ENCODE measurements at regions of chr1 and their contacts with region 1.

Region 1: DNA sequence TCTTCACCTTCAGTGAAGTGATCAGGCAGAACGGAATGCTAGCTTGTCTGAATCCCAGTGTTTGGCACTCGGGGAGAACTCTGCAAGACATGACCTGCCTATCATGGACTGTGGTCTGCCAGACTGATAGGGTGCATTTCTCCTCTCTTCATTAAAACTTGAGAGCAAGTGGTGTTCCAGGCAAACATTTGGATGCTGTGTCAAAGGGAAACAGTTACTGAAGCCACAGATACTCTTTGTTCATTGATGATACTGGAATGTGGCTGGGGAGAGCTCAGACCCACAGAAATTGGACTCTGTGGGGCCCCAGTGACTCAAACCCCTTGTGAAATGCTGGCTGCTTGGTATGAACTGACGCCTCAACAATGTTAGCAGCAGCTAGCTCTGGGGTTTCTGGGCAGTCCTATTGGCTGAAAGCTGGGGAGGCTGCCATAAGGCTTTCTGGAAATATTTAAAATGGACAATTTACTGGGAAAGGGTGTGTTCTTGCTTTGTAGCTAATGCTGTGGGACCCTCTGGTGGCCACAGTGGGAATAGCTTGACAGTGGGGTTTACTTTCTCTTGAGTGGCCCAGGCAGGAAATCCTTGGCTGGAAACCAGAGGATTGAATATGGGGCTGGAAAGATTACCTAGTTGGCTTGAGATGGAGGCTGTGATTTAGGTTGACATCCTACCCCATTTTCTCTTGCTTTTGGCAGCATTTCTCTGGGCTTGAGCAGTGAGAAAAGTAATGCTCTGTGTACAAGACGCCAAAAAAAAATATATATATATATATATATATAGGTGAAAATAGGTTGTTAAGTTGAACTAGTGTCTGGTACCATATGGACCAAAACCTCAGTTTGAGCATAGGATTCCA is 8.0 kb upstream of the S100A10 start:
- DNase-seq: peak; percentile 87 to 94 (median 89)
- H3K4me3 ChIP-seq: no peak overlapping the region
- H3K27ac ChIP-seq: no peak overlapping the region
- H3K4me1 ChIP-seq: no peaks in the 10 kb centered on the region
- H3K27me3 ChIP-seq: no peaks in the 10 kb centered on the region
- CTCF ChIP-seq: peak; percentile 92

Region 2: GRCh38 chr1:151934048-151934493 is 67.5 kb before region 1 on chr1:
- intact Hi-C with region 1: loop called (anchors 5 kb)
- DNase-seq: peak in 3 of 5 donors; percentile 55 to 84 (median 83)
- H3K4me3 ChIP-seq: no peak overlapping the region
- H3K27ac ChIP-seq: no peak overlapping the region
- H3K4me1 ChIP-seq: peaks cover 2 to 5% (median 3%) of the 10 kb centered on the region in 3 donors
- H3K27me3 ChIP-seq: no peaks in the 10 kb centered on the region
- CTCF ChIP-seq: peak; percentile 82

Region 3: GRCh38 chr1:152191266-152191665 is 189.6 kb after region 1 on chr1:
- intact Hi-C with region 1: no loop called
- DNase-seq: no peak
- H3K4me3 ChIP-seq: no peak overlapping the region
- H3K27ac ChIP-seq: no peak overlapping the region
- H3K4me1 ChIP-seq: no peaks in the 10 kb centered on the region
- H3K27me3 ChIP-seq: no peaks in the 10 kb centered on the region
- CTCF ChIP-seq: no peak